Endothelial cell of umbilical vein (primary cell): ENCODE measurements at regions of chr13 and their contacts with region 1.

Region 1: GRCh38 chr13:89375839-89376238 is 1704.7 kb downstream of the SLITRK5 start:
- DNase-seq: peak; percentile 73
- H3K4me3 ChIP-seq: no peak overlapping the region
- H3K27ac ChIP-seq: peak overlapping the region; percentile 1
- H3K4me1 ChIP-seq: peaks cover 2% of the 10 kb centered on the region
- H3K27me3 ChIP-seq: no peaks in the 10 kb centered on the region
- CTCF ChIP-seq: no peak
- POLR2A ChIP-seq: no peak

Region 2: GRCh38 chr13:89361909-89362308 is 13.9 kb before region 1 on chr13:
- CTCF ChIA-PET with region 1: interaction called, 18 read pairs
- POLR2A ChIA-PET with region 1: no interaction called
- dilution Hi-C with region 1: no loop called
- intact Hi-C with region 1: no loop called
- DNase-seq: peak; percentile 26
- H3K4me3 ChIP-seq: no peak overlapping the region
- H3K27ac ChIP-seq: no peak overlapping the region
- H3K4me1 ChIP-seq: no peaks in the 10 kb centered on the region
- H3K27me3 ChIP-seq: no peaks in the 10 kb centered on the region
- CTCF ChIP-seq: peak in 1 of 2 donors; percentile 15
- POLR2A ChIP-seq: no peak

Region 3: DNA sequence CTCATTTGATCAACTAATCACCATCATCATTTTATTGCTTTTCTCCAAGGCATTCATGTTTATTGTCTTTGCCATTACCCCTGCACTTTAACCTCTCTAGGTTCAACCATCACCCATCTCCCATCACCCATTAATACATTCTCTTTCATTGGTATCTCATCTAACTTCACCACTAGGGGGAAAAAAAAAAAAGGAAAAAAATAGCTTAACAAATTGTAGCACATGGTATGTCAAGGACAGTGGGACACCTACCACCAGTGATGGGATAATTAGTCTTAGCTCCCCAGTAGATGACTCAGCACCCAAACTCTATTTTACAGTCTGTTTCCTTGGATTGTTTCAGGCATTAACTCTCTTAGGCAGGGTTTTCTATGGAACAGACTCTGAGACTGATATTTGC is 201.5 kb after region 1 on chr13:
- CTCF ChIA-PET with region 1: no interaction called
- POLR2A ChIA-PET with region 1: no interaction called
- dilution Hi-C with region 1: no loop called
- intact Hi-C with region 1: no loop called
- DNase-seq: no peak
- H3K4me3 ChIP-seq: no peak overlapping the region
- H3K27ac ChIP-seq: no peak overlapping the region
- H3K4me1 ChIP-seq: no peaks in the 10 kb centered on the region
- H3K27me3 ChIP-seq: no peaks in the 10 kb centered on the region
- CTCF ChIP-seq: no peak
- POLR2A ChIP-seq: no peak